GM12878 (cell line): ENCODE measurements at regions of chr1 and their contacts with region 1.

Region 1: DNA sequence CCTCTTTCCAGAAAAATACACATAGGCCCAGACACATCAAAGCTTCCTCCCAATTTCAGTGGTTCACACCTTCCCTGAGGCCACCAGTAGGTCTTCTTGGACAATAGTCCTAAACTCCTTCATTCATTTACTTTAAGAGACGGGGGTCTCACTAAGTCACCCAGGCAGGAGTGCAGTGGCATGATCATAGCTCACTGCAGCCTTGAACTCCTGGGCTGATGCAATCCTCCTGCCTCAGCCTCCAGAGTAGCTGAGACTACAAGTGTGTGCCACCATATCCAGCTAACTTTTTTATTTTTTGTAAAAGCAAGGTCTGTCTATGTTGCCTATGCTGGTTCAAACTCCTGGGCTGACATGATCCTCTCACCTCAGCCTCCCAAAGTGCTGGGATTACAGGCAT is 8.2 kb upstream of the FHAD1 start:
- DNase-seq: no peak
- ATAC-seq: no peak
- H3K4me3 ChIP-seq: no peak overlapping the region
- H3K27ac ChIP-seq: no peak overlapping the region
- H3K4me1 ChIP-seq: no peaks in the 10 kb centered on the region; the same call in 1 of the 2 replicates
- H3K27me3 ChIP-seq: no peaks in the 10 kb centered on the region
- CTCF ChIP-seq: no peak
- EP300 ChIP-seq: no peak
- POLR2A ChIP-seq: no peak
- RAD21 ChIP-seq: no peak

Region 2: DNA sequence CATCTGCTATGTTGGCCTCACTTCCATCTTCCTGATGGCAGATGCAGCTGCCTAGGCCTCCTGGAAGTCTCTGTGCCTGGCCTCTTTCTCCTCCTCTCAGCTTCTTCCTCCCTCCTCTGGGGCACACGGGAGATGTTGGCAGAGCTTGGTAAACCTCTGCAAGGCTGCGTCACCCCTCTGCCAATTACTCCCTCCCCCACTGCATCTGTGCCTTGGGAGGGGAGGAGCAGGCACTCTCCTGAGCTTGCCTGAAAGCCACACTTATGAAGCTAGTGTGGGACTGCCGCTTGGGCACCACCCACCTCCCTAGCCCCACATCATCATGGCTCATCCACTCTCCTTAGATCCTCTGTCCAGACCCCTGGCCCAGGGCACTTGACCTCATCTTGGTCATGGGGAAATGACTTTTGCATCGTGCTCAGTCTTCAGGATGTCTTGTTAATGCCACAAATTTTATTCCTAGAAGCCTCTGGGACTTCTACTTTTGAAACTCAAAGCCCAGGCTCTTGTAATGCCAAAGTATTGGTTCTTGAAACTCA is 92.6 kb before region 1 on chr1:
- CTCF ChIA-PET with region 1: no interaction called
- POLR2A ChIA-PET with region 1: no interaction called
- RAD21 ChIA-PET with region 1: no interaction called
- SMC1A ChIA-PET with region 1: no interaction called
- in situ Hi-C with region 1: no loop called
- intact Hi-C with region 1: no loop called
- DNase-seq: no peak
- ATAC-seq: no peak
- H3K4me3 ChIP-seq: no peak overlapping the region
- H3K27ac ChIP-seq: no peak overlapping the region
- H3K4me1 ChIP-seq: peaks cover 6% of the 10 kb centered on the region
- H3K27me3 ChIP-seq: peaks cover 0 to 2% of the 10 kb centered on the region in 2 experiments; a peak in 2 of 4 replicates
- CTCF ChIP-seq: no peak
- EP300 ChIP-seq: no peak
- POLR2A ChIP-seq: no peak
- RAD21 ChIP-seq: no peak

Region 3: DNA sequence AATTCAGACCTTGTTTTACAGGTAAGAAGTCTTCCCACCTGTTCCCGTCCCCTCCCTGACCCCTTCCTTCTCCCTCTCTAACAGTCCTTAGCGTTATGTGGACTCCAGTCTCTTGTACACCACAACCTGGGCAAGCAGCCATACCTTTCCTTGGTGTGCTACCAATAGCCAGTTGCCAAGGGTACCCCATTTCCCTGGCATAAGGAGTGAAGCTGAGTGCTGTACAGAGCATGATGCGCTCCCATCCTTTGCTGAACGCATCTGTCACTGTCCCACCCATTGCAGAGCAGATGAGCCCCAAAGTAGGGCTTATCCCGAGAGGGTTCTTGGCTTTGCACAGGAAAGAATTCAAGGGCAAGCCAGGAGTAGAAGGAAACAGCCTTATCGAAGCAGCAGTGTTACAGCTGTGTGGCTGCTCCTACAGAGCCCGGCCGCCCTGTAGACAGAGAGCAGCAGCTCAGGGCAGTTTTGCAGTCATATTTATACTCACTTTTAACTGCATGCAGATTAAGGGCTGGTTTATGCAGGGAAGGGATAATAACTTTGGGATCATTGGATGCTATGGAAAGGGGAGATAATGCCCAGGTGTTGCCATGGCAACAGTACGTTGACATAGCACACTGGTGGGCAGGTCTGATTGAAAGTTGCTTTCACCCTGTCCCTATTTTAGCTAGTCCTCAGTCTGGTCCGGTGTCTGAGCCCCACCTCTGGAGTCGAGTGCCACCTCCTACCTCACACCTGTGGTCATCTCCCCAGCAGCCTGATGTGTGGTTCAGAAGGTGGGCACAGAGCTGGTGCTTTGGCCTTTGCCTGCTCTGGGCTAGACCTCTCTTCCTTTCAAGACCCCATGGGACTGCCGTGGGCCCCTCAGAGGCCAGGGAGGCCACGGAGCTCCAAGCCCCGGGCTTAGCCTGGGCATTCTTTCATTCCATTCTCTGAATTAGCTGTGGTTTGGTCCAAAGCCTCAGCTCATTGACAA is 13.4 kb after region 1 on chr1:
- CTCF ChIA-PET with region 1: interaction called, 8 read pairs
- POLR2A ChIA-PET with region 1: interaction called, 18 read pairs
- RAD21 ChIA-PET with region 1: interaction called, 4 read pairs
- SMC1A ChIA-PET with region 1: interaction called, 28 read pairs
- in situ Hi-C with region 1: no loop called
- intact Hi-C with region 1: no loop called
- DNase-seq: no peak
- ATAC-seq: peak; percentile 38
- H3K4me3 ChIP-seq: no peak overlapping the region
- H3K27ac ChIP-seq: peak overlapping the region; percentile 48
- H3K4me1 ChIP-seq: peaks cover 27% of the 10 kb centered on the region
- H3K27me3 ChIP-seq: no peaks in the 10 kb centered on the region
- CTCF ChIP-seq: no peak
- EP300 ChIP-seq: no peak
- POLR2A ChIP-seq: no peak
- RAD21 ChIP-seq: no peak